GM12878 (cell line): ENCODE measurements at regions of chr5 and their contacts with region 1.

Region 1: DNA sequence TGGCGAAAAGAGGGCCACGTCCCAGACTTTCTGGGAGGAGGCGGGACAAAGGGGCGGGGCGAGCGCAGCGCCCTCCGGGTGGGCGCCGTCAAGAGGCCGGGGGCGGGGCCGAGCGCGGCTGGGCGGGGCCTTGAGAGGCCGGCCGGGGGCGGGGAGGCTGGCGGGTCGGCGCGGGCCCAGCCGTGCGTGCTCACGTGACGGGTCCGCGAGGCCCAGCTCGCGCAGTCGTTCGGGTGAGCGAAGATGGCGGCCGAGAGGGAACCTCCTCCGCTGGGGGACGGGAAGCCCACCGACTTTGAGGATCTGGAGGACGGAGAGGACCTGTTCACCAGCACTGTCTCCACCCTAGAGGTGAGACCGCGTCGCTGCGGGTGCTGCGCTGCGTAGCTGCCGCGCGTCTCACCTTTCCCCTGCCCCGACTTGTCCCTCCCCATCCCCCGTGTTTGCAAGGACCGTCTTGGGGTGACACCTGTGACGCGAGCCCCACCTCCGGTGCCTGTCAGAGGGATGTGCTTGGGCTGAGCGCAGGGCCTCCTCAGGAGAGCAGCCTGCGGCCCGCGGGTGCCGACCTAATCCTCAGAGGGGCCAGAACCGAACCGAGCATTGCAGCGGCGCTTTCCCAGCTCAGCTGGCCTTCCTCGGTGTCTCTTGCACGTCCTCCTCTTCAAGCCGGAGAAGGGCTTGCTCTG is at the start of gene SNX2:
- DNase-seq: no peak
- ATAC-seq: peak; percentile 94
- H3K4me3 ChIP-seq: peak within 1 kb of the TSS; percentile 96
- H3K27ac ChIP-seq: peak within 1 kb of the TSS; percentile 67
- H3K4me1 ChIP-seq: peaks cover 3% of the 10 kb centered on the region
- H3K27me3 ChIP-seq: no peaks in the 10 kb centered on the region
- CTCF ChIP-seq: peak in 1 of 3 experiments; percentile 28; a peak in 2 of 6 replicates
- EP300 ChIP-seq: no peak
- POLR2A ChIP-seq: peak; percentile 95
- RAD21 ChIP-seq: no peak
- polyA plus RNA-seq, gene SNX2: 59.3 to 63.5 TPM

Region 2: DNA sequence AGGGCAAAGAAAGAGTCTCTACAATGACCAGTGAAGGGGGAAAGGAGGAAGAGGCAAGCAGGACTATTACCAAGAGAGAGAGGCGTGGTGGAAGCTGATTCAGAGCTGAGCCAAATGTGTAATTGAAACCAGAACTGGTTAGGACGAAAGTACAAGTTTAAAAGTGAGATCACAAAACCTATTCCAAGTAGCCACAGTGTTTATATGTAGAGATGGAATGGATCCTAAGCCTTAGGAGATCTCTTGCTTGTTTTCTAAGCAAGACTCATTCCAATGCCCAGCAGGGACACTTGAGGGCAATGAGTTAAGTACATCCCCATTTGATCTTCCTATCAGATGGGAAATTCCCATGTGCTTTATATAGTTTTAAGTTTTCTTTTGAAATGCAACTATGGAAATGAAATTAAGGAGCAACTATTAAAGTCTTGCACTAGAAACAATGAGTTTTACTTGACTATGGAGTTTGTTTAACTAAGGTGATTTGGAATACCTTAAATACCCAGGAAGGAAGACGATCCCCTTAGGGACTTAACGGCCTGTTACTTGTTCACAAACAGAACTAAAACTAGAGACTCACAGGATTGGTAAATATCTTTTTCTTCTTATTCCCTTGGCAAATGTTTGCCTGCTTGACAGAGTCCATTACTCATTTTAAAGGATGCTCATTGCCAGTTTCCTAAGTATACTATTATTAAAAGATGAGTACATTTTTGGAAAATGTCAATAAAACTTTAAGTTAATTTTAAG is 51.2 kb before region 1 on chr5:
- CTCF ChIA-PET with region 1: interaction called, 4 read pairs
- POLR2A ChIA-PET with region 1: interaction called, 4 read pairs
- RAD21 ChIA-PET with region 1: no interaction called
- SMC1A ChIA-PET with region 1: no interaction called
- in situ Hi-C with region 1: no loop called
- intact Hi-C with region 1: loop called (anchors 5 kb)
- DNase-seq: peak; percentile 59
- ATAC-seq: peak; percentile 94
- H3K4me3 ChIP-seq: 0 out of 2 replicates have a peak overlapping the region, but pooled peaks have one; percentile 6
- H3K27ac ChIP-seq: peak overlapping the region; percentile 20; the same call in 1 of the 2 replicates
- H3K4me1 ChIP-seq: peaks cover 12% of the 10 kb centered on the region
- H3K27me3 ChIP-seq: no peaks in the 10 kb centered on the region
- CTCF ChIP-seq: no peak
- EP300 ChIP-seq: peak; percentile 42 to 62; a peak in 2 of 4 replicates
- POLR2A ChIP-seq: no peak
- RAD21 ChIP-seq: 0 out of 2 replicates have a peak, but pooled peaks have one; percentile 11

Region 3: DNA sequence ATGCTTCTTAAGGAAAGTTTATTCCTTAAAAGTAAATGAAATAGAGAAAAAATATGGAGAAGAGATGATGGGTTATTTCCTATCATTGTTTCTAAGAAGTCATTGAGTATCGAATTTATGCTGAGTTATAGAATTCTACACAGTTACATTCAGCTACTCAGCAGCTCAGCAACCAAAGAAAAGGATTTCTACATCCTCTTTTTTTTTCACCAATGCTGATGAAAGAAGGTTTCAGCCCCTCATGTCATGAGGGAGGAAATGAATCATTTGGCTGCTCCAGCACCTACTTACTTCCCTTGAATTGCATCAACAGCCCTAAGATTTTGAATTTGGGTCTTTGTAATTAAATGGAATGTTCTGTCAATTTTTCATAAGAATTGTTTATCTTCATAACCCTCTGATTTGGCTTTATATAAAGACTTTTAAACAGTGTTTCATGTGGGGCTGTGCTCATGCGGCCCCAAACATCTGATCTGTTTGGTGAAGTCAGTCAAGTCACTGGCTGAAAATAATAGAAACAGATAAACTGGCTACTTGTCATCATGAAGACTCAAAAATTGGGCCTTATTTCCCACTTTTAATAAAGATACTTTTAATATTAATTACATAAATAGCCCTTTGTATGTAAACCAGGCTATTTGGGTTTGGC is 18.6 kb before region 1 on chr5:
- CTCF ChIA-PET with region 1: interaction called, 6 read pairs
- POLR2A ChIA-PET with region 1: interaction called, 5 read pairs
- RAD21 ChIA-PET with region 1: interaction called, 3 read pairs
- SMC1A ChIA-PET with region 1: interaction called, 16 read pairs
- in situ Hi-C with region 1: no loop called
- intact Hi-C with region 1: loop called (anchors 2 kb)
- DNase-seq: no peak
- ATAC-seq: peak; percentile 86
- H3K4me3 ChIP-seq: no peak overlapping the region
- H3K27ac ChIP-seq: peak overlapping the region; percentile 66; the same call in 1 of the 2 replicates
- H3K4me1 ChIP-seq: peaks cover 17% of the 10 kb centered on the region
- H3K27me3 ChIP-seq: no peaks in the 10 kb centered on the region
- CTCF ChIP-seq: no peak
- EP300 ChIP-seq: no peak
- POLR2A ChIP-seq: no peak
- RAD21 ChIP-seq: peak; percentile 11; the same call in 1 of the 2 replicates

Region 4: DNA sequence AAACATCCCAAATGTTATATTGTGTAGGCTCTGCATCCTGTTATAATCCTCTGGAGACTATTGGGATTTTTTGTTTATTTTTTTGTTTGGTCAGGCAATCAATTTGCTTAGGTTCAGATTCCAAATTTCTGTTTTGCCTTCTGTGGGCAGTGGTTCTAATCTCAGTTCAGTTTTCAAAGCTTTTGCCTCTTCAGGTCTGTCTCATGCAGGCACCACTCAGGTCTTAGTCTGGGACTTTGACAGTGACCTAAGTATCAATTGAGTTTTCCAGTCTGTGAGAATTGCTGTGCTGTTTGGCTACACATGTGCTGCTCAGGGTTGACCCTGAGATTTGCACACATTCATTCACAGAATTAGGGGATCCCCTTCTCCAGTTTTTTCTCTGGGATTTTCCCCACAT is 14.0 kb after region 1 on chr5:
- CTCF ChIA-PET with region 1: interaction called, 6 read pairs
- POLR2A ChIA-PET with region 1: interaction called, 3 read pairs
- RAD21 ChIA-PET with region 1: interaction called, 3 read pairs
- SMC1A ChIA-PET with region 1: interaction called, 13 read pairs
- in situ Hi-C with region 1: no loop called
- intact Hi-C with region 1: no loop called
- DNase-seq: no peak
- ATAC-seq: no peak
- H3K4me3 ChIP-seq: no peak overlapping the region
- H3K27ac ChIP-seq: no peak overlapping the region
- H3K4me1 ChIP-seq: peaks cover 5% of the 10 kb centered on the region; the same call in 1 of the 2 replicates
- H3K27me3 ChIP-seq: no peaks in the 10 kb centered on the region
- CTCF ChIP-seq: no peak
- EP300 ChIP-seq: no peak
- POLR2A ChIP-seq: no peak
- RAD21 ChIP-seq: no peak

Region 5: GRCh38 chr5:123249446-123249845 is 474.4 kb after region 1 on chr5:
- CTCF ChIA-PET with region 1: no interaction called
- POLR2A ChIA-PET with region 1: no interaction called
- RAD21 ChIA-PET with region 1: no interaction called
- SMC1A ChIA-PET with region 1: no interaction called
- in situ Hi-C with region 1: no loop called
- intact Hi-C with region 1: no loop called
- DNase-seq: no peak
- ATAC-seq: no peak
- H3K4me3 ChIP-seq: no peak overlapping the region
- H3K27ac ChIP-seq: no peak overlapping the region
- H3K4me1 ChIP-seq: no peaks in the 10 kb centered on the region
- H3K27me3 ChIP-seq: no peaks in the 10 kb centered on the region
- CTCF ChIP-seq: no peak
- EP300 ChIP-seq: no peak
- POLR2A ChIP-seq: no peak
- RAD21 ChIP-seq: no peak